ENCODE measurements at regions of chr1 and their contacts with region 1.

Region 1: DNA sequence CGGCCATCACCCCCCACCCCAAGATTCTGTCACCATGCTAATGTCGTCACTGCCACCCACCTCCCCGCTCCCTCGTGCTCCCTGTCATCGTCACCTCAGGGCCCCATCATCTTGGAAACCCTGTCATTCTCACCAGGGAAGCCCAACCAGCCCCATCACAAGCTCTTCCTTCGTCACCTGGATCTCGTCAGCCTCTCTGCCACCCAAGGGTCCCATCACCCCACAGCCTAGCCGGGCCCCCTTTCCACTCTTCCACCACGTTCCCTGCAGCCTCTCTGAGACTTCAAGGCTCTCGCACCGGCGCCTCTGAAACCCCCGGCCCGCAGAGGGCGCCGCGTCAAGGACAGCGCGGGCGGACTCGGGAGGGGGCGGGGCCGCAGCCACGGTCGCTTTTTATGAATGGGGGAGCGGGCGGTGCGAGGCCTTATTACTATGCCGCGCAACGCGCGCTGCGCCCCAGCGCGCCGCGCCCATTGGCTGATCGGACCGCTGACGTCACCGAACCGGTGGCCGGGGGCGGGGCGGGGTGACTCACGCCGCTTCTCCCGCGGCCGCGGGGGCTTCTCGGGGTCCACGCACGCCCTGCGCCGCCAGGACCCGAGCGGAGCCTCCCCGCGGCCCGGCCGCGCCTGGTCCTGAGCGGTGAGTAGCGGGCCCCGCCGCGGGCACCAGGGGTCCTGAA is at the start of gene GPR3:
- DNase-seq: peak; percentile 90
- H3K4me3 Mint-ChIP-seq: peak within 1 kb of the TSS; percentile 72
- H3K27ac Mint-ChIP-seq: peak within 1 kb of the TSS; percentile 53
- H3K4me1 Mint-ChIP-seq: peaks cover 18% of the 10 kb centered on the region
- H3K27me3 Mint-ChIP-seq: no peaks in the 10 kb centered on the region
- CTCF ChIP-seq: peak; percentile 53
- total RNA-seq, gene GPR3: 0.47 and 0.65 TPM in 2 replicates

Region 2: DNA sequence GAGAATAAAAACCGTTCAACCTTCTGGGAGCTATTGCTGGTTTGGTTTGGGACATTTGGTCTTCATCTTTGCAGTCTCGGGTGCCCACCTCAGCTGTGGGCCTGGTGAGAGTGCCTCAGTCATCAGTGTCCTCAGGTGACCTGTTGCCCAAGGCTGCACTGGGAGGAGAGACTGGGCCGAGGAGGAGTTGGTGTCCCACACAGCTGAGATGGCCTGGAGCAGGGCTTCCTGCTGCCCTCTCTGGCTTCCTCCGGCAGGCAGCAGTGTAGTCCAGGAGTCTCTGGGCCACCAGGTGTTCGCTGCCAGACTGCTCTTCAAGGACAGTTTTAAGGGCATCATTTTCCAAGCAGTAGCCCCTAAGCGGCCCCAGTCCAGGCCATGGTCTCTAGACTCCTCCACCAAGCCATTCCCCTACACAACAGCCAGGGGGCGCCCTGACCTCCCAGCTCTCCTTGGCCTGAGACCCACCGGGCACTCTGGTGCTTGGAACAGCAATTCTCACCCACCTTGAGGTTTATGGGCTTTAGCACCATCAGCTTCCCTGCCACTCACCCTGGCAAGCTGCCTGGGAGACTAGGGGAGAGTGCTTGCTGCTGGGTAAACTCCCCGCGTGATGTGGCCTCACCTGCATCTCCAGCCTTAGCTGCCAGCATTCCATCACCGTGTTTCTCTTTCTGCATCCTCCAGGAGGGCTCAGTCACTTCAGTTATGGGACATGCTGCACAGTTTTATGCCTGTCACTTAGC is 59.5 kb before region 1 on chr1:
- CTCF ChIA-PET with region 1: interaction called, 12 read pairs
- POLR2A ChIA-PET with region 1: interaction called, 8 read pairs
- intact Hi-C with region 1: loop called (anchors 1 kb)
- DNase-seq: peak; percentile 56
- H3K4me3 Mint-ChIP-seq: no peak overlapping the region
- H3K27ac Mint-ChIP-seq: peak overlapping the region; percentile 35
- H3K4me1 Mint-ChIP-seq: peaks cover 9% of the 10 kb centered on the region
- H3K27me3 Mint-ChIP-seq: no peaks in the 10 kb centered on the region
- CTCF ChIP-seq: peak; percentile 75

Region 3: DNA sequence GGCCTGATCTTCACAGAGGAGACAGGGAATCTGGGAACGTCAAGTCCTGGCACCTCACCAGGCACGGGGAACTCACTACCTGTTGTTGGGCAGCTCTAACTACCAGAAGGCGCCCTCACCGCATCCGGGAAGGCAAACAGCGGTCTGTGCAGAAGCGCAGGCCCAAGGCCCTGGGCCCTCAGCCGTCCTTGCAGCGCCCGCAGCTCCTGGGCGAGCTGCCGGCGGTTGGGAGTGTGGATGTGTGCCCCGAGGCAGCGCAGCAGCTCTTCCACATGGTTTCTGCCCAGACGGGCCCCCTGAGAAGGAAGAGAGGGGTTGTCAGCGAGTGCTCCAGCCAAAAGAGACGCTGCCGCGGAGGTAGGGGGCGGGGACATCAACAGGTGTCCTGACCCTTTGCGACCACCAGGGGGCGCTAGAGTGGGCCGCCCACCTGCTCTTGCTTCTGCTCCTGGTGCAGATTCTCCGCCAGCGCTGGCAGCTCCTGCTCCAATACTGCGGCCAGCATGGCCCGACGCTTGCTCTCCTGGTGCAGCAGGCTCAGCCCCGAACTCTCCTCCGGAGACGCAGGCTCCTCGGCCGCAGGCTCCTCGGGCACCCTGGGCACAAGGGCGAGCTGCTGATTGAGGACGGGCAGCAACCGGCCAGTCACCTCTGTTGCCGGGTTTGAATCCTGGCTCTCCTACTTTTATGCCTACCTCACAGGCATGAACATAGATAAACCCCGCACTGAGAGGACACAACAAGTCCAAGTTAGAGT is 34.8 kb before region 1 on chr1:
- CTCF ChIA-PET with region 1: interaction called, 21 read pairs
- POLR2A ChIA-PET with region 1: interaction called, 4 read pairs
- intact Hi-C with region 1: no loop called
- DNase-seq: peak; percentile 50
- H3K4me3 Mint-ChIP-seq: no peak overlapping the region
- H3K27ac Mint-ChIP-seq: no peak overlapping the region
- H3K4me1 Mint-ChIP-seq: peaks cover 4% of the 10 kb centered on the region
- H3K27me3 Mint-ChIP-seq: no peaks in the 10 kb centered on the region
- CTCF ChIP-seq: peak; percentile 95

Region 4: GRCh38 chr1:27408151-27408550 is 15.9 kb after region 1 on chr1:
- CTCF ChIA-PET with region 1: interaction called, 17 read pairs
- POLR2A ChIA-PET with region 1: interaction called, 4 read pairs
- intact Hi-C with region 1: no loop called
- DNase-seq: no peak
- H3K4me3 Mint-ChIP-seq: no peak overlapping the region
- H3K27ac Mint-ChIP-seq: no peak overlapping the region
- H3K4me1 Mint-ChIP-seq: peaks cover 6% of the 10 kb centered on the region
- H3K27me3 Mint-ChIP-seq: no peaks in the 10 kb centered on the region
- CTCF ChIP-seq: no peak

Region 5: GRCh38 chr1:27496604-27497155 is 104.4 kb after region 1 on chr1:
- CTCF ChIA-PET with region 1: no interaction called
- POLR2A ChIA-PET with region 1: no interaction called
- intact Hi-C with region 1: no loop called
- DNase-seq: no peak
- H3K4me3 Mint-ChIP-seq: no peak overlapping the region
- H3K27ac Mint-ChIP-seq: no peak overlapping the region
- H3K4me1 Mint-ChIP-seq: no peaks in the 10 kb centered on the region
- H3K27me3 Mint-ChIP-seq: no peaks in the 10 kb centered on the region
- CTCF ChIP-seq: no peak

Region 6: GRCh38 chr1:27662707-27663393 is 270.6 kb after region 1 on chr1:
- CTCF ChIA-PET with region 1: interaction called, 3 read pairs
- POLR2A ChIA-PET with region 1: interaction called, 3 read pairs
- intact Hi-C with region 1: loop called (anchors 1 kb)
- DNase-seq: peak; percentile 86
- H3K4me3 Mint-ChIP-seq: no peak overlapping the region
- H3K27ac Mint-ChIP-seq: peak overlapping the region; percentile 81
- H3K4me1 Mint-ChIP-seq: peaks cover 29% of the 10 kb centered on the region
- H3K27me3 Mint-ChIP-seq: no peaks in the 10 kb centered on the region
- CTCF ChIP-seq: peak; percentile 69